ENCODE measurements at regions of chr17 and their contacts with region 1.

Region 1: DNA sequence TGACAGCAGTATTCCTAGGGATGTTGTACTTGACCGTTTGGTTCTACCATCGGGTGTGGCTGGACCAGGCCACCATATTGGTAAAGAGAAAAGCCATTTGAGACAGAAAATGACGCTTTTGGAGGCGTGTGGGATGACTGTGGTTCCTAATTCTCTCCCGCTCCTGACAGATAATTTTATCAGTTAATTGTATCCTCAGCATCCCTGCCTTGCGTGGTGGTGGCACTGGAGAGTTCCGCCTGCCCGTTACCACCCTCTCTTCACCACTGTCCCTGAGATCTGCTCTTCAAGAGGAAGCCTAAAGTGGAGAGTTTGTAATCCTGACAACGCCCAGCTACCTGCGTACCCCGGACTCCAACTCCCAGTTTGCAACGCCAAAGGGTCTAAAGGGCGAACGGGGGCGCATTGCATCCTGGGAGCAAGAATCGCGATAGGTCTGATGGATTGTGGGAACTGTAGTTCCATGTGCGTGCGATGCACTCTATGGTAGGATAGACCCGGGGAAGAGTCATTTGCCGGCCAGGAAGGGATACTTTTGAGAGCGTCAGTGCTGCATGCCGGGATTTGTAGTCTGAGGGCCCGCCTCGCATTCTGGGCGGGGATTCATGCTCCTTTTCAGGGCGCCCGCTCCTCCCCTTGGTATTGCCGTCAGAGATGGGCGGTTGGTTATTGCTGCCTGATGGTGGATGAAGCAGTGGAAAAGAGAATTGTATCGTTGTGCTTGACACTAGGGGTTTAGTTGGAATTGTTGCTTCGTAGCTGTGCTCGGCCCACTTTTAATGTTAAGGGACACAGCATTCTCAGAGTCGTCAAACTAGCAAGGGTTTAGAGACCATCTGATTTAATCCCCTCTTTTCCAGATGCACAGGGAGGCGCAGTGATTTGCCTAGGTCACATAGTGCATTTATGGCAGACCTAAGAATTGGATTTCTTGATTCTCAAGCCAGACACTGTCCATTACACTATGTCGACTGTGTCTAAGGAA is 965 bp upstream of the PHF12 start:
- DNase-seq: peak; percentile 99 to 100 (median 100)
- H3K4me3 ChIP-seq: peak overlapping the region; percentile 61 to 95 (median 84)
- H3K27ac ChIP-seq: peak overlapping the region; percentile 92 to 96
- H3K4me1 ChIP-seq: peaks cover 13 to 42% (median 30%) of the 10 kb centered on the region in 4 experiments
- H3K27me3 ChIP-seq: no peaks in the 10 kb centered on the region

Region 2: DNA sequence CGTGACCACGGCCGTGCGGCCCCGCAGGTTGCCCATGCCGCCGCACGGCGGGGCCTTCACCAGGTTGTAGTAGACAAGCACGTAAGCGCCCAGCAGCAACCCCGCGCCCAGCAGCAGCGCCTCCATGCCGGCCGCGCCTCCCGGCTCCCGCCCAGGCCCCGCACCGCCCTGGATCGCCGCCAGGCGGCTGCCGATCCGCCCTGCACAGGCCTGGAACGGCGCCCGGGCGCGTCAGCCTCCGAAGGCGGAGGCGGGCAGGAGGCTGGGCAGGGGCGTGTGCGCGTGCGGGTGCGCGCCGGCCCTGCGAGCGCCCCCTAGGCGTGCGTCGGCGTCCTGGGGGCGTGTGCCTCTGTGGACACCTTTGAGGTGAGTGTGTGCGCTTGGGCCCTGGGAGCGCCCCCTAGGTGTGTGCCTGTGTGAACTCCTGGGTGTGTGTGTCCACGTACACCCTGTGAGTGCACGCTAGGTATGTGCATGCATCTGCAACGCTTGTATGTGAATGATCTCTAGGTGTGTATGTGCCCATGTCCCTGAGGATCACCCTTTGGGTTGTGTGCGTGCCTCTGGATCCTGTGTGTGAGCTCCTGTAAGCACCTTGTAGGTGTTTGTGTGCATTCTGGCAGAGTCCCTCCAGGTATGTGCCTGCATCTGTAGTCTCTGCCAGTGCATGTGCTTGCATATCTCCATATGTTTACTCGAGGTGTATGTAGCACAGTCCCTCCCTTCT is 49.3 kb before region 1 on chr17 and contains the start of gene DHRS13:
- CTCF ChIA-PET with region 1: interaction called, 12 read pairs
- POLR2A ChIA-PET with region 1: interaction called, 5 read pairs
- DNase-seq: peak; percentile 96 to 97 (median 96)
- H3K4me3 ChIP-seq: peak within 1 kb of the TSS; percentile 62 to 79 (median 75)
- H3K27ac ChIP-seq: peak within 1 kb of the TSS; percentile 21 to 77
- H3K4me1 ChIP-seq: peaks cover 0 to 32% (median 23%) of the 10 kb centered on the region in 4 experiments
- H3K27me3 ChIP-seq: no peaks in the 10 kb centered on the region

Region 3: GRCh38 chr17:28916302-28916934 is 35.9 kb before region 1 on chr17:
- CTCF ChIA-PET with region 1: interaction called, 15 read pairs
- POLR2A ChIA-PET with region 1: no interaction called
- DNase-seq: peak; percentile 45 to 63 (median 59)
- H3K4me3 ChIP-seq: no peak overlapping the region
- H3K27ac ChIP-seq: no peak overlapping the region
- H3K4me1 ChIP-seq: no peaks in the 10 kb centered on the region
- H3K27me3 ChIP-seq: no peaks in the 10 kb centered on the region

Region 4: GRCh38 chr17:28937044-28937729 is 15.1 kb before region 1 on chr17:
- CTCF ChIA-PET with region 1: interaction called, 128 read pairs
- POLR2A ChIA-PET with region 1: interaction called, 9 read pairs
- DNase-seq: no peak
- H3K4me3 ChIP-seq: peak overlapping the region in 1 of 7 experiments; percentile 25
- H3K27ac ChIP-seq: peak overlapping the region in 1 of 2 experiments; percentile 22
- H3K4me1 ChIP-seq: peaks cover 26 to 52% (median 32%) of the 10 kb centered on the region in 4 experiments
- H3K27me3 ChIP-seq: no peaks in the 10 kb centered on the region

Region 5: GRCh38 chr17:29116804-29117772 is 164.8 kb after region 1 on chr17:
- CTCF ChIA-PET with region 1: interaction called, 15 read pairs
- POLR2A ChIA-PET with region 1: no interaction called
- DNase-seq: peak; percentile 58 to 75 (median 68)
- H3K4me3 ChIP-seq: no peak overlapping the region
- H3K27ac ChIP-seq: no peak overlapping the region
- H3K4me1 ChIP-seq: no peaks in the 10 kb centered on the region
- H3K27me3 ChIP-seq: no peaks in the 10 kb centered on the region

Measured in common myeloid progenitor, CD34-positive (primary cell).